Heart right ventricle (tissue), 16 donors: ENCODE measurements at regions of chr10 and their contacts with region 1.

Region 1: DNA sequence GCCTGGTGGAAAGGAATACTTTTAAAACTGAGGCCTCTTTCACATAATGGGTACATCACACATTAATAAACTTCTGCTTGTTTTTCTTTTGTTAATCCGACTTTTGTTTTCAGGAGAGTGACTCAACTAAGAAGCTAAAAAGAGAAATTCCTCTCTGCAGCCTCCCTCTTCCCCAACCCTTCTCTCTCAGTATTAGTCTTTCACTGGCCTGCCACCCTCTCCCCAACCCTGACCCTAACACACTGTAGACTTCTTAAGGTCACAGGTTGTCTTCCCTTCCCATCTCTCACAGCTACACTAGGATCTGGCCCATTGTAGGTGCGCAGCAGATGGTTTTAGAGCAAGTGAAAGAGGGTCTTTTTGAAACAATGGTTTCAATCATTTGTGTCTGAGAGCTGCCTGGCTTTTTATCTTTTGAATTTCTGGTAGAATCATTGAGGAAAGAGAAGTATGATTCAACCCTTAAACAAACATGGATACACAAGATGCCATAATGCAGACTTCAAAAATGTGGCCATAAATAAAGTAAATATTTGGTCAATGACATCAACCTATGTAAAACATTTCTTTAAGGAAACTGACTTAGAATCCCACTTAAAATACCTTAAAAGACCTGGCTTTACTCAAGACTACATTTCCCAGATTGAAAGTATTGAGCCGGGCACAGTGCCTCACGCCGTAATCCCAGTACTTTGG is 17.9 kb upstream of the FFAR4 start:
- DNase-seq: no peak
- ATAC-seq: no peak
- H3K4me3 ChIP-seq: no peak overlapping the region
- H3K27ac ChIP-seq: no peak overlapping the region
- H3K4me1 ChIP-seq: no peaks in the 10 kb centered on the region
- H3K27me3 ChIP-seq: no peaks in the 10 kb centered on the region
- CTCF ChIP-seq: no peak

Region 2: GRCh38 chr10:93458821-93459257 is 89.7 kb before region 1 on chr10:
- intact Hi-C with region 1: no loop called
- DNase-seq: peak; percentile 27 to 59
- ATAC-seq: peak; percentile 76 to 92 (median 86)
- H3K4me3 ChIP-seq: no peak overlapping the region
- H3K27ac ChIP-seq: peak overlapping the region in 9 of 10 donors; percentile 28 to 91 (median 69)
- H3K4me1 ChIP-seq: peaks cover 7 to 61% (median 20%) of the 10 kb centered on the region in 9 donors
- H3K27me3 ChIP-seq: no peaks in the 10 kb centered on the region
- CTCF ChIP-seq: no peak

Region 3: GRCh38 chr10:93680412-93681047 is 132.0 kb after region 1 on chr10:
- intact Hi-C with region 1: loop called in 8 of 10 experiments (anchors 5 to 10 kb)
- DNase-seq: no peak
- ATAC-seq: peak in 3 of 8 donors; percentile 23 to 81 (median 25)
- H3K4me3 ChIP-seq: no peak overlapping the region
- H3K27ac ChIP-seq: no peak overlapping the region
- H3K4me1 ChIP-seq: peaks cover 0 to 11% (median 0%) of the 10 kb centered on the region in 9 donors
- H3K27me3 ChIP-seq: no peaks in the 10 kb centered on the region
- CTCF ChIP-seq: peak in 7 of 9 donors; percentile 20 to 56 (median 51)